ENCODE measurements at regions of chr12 and their contacts with region 1.

Region 1: DNA sequence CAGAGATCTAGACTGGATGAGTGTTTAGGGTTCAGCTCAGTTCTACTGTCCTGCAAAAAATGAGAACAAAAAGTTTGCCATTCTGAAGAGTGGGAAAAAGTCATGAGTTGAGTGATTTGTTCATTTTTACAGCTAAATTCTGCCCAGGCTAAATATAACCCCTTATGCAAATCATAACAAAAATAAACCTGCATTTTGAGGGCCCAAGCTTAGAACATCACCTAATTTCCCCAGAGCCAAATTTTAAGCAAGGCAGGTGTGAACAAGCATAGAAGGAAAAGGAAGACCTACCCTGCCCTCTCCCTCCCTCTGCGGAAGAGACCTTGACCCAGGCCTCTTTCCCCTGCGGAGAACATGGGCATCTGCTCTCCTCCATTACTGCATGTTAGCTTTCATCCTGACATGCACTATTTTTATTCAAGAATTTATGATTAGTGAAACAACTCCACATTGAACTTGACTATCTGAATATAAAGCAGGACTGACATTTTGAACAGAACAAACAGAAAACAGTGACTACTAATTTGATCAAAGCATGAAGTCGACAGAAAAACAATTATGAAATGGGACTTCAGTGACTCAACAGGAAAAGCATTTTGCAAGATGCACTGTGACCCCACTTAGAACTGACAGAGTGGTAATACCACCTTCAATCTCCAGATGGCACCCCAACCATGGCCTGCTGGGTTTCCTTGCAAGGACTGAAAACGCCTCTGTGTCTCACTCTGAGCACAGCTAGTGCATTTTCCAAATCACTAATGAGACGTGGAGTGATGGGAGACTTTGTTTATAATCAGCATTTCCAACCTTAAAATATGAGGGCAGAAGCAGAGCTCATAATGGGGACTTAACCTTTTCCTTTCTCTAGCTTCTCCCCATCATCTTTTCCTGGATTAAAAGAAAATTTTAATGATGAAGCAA is 30.9 kb upstream of the SELPLG start:
- DNase-seq: peak; percentile 87
- H3K4me3 ChIP-seq: no peak overlapping the region
- H3K27ac ChIP-seq: peak overlapping the region; percentile 75
- H3K27me3 ChIP-seq: no peaks in the 10 kb centered on the region
- CTCF ChIP-seq: peak; percentile 98

Region 2: DNA sequence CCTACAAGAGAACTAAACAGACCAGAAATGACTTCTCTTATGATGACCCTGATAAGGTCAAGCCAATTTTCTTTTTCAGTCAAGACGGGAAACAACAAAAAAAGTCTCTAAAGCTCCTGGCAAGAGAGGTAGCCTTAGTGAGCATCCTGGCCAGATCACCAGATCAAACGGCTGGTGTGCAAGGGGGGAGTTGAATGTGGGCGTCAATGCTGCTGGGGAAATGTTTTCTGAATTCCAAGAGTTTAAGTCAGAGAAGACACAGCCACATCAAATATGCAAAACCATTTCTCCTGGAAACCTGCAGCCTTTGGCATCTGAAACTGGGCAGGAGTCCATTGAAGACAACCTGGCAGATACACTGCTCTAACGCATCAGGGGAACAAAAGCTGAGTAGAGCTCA is 14.9 kb before region 1 on chr12:
- CTCF ChIA-PET with region 1: interaction called, 18 read pairs
- POLR2A ChIA-PET with region 1: interaction called, 12 read pairs
- DNase-seq: peak; percentile 78
- H3K4me3 ChIP-seq: no peak overlapping the region
- H3K27ac ChIP-seq: peak overlapping the region; percentile 68
- H3K27me3 ChIP-seq: no peaks in the 10 kb centered on the region
- CTCF ChIP-seq: no peak

Region 3: DNA sequence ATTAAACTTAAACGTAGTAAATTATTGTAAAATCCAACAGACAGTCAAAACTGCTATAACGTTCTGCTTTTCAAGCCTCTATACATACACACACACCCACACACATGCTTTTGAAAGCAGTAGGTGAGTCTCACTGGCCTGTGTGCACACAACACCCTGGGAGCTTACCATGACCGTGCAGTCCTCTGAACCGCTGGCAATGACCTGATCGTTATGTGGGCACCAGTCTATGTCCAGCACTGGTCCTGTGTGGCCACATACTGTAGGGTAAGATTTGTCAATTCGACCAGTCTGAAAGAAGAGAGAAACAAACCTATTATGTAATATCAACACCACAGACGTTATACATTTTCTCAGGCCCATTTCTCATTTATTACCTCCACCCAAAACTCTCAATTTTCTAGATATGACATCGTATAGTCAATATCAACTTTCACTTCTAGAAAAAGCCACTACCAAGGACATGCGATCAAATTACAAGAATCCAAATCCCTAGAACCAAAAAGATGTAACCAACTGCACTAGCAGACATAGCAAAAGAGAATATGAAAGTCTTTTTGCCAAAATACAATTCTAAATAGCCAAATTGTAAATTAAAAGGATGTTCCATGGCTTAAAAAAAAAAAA is 13.6 kb after region 1 on chr12:
- CTCF ChIA-PET with region 1: interaction called, 11 read pairs
- POLR2A ChIA-PET with region 1: no interaction called
- DNase-seq: no peak
- H3K4me3 ChIP-seq: no peak overlapping the region
- H3K27ac ChIP-seq: no peak overlapping the region
- H3K27me3 ChIP-seq: no peaks in the 10 kb centered on the region
- CTCF ChIP-seq: no peak

Region 4: DNA sequence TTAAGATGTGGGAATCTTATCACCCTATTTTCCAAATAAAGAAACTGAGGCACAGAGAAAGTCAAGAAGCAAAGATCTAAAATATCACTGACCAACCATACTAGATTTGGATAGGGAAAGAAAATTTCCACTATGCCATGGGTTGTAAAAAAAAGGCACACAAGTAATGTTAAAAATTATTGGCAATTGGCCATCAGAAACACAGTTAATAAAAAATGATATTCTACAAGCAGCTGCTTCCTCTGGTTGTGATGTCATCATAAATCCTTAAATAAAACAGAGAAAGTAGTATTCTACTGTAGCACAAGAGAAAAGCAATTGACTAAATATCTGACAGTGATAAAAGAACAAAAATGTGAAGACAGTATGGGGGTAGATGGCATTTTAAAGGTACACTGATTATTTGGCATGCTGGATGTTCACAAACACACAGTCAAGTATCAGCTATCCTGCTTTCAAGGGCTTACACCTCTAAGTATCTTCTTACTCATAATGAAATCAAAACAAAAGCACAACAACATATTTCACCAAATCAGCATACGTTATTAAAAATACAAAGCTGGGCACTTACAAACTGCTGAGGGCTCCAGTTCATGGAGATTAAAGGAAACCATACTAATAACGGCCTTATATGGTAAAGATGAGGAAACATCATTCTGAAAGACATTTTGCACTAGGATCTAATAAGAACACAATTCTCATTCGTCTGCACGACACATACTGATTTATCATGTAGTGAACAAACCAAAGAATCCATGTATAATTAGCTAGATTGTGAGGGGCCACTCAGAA is 21.1 kb after region 1 on chr12:
- CTCF ChIA-PET with region 1: interaction called, 19 read pairs
- POLR2A ChIA-PET with region 1: interaction called, 13 read pairs
- DNase-seq: no peak
- H3K4me3 ChIP-seq: no peak overlapping the region
- H3K27ac ChIP-seq: no peak overlapping the region
- H3K27me3 ChIP-seq: no peaks in the 10 kb centered on the region
- CTCF ChIP-seq: no peak

Region 5: DNA sequence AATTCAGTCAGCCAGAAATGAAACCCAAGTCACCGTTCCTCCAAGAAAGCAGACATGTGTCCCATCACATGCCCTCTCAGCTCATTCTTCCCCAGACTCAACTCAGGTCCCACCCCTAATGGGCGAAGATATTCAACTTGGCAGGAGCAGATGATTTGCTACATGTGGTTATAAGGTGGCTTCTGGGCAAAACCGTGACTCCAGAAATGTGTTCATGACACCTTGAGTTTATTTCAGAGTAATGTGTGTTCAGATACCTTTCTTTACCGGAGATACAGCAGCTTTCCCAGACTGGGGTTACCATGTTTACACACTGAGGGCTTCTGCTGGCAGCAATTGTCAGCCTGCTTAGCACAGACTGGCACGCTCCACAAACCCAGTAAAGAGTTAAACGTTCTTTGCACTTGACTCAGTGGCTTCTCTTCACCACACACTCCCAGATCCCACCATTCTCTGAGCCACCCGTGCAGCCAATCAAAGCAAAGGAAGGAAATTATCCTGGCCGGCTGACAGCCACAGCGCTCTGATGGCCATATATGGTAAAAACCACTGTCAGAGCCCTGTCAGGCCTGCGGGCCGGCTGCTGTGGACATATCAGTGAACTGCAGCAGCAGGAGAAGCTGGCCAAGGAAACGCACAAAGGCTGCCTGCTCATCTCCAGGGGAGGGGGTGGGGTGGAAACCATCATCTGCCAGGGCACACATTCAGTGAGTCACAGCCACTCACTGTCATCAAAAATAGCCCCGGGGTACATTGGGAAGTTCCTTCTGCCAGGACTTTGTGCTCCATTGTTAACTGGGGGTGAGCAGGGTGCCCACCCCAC is 26.8 kb after region 1 on chr12:
- CTCF ChIA-PET with region 1: interaction called, 19 read pairs
- POLR2A ChIA-PET with region 1: interaction called, 13 read pairs
- DNase-seq: peak; percentile 99
- H3K4me3 ChIP-seq: peak overlapping the region; percentile 46
- H3K27ac ChIP-seq: peak overlapping the region; percentile 100
- H3K27me3 ChIP-seq: no peaks in the 10 kb centered on the region
- CTCF ChIP-seq: peak; percentile 31

Region 6: DNA sequence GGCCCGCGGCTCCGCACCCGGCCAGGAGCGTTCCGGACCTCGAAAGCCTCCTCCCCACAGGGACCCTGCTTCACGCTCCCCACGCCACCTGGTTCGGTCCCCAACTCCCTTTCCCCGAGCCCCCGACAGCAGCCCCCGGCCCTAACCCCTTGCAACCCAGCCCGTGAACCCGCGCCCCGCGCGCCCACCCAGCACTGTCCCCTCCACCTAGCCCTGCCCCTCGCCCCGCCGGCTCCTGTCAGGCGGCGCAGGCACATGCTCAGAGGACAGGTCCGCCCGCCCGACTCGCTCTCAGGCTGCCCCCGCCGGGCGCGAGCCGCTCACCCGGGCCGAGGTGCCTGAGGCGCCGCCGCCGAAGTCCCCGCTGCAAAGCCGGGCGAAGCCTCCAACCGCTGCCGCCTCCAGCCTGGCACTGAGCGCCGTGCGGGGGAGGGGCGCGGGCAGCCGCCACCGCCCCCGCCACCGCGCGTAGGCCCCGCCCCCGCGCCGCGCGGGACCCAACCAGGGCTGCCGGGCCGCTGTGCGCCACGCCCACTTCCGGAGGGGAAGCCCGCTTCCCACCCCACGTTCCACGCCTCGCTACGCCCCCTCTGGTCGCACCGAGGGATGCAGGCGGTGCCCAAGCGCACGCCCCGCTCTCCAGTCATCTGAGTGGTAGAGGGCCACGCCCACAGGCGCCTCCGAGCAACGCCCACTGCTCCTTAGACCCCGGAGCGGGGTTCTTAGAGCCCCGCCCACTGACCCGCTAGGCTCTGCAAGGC is 66.7 kb after region 1 on chr12 and contains the start of gene CORO1C:
- CTCF ChIA-PET with region 1: interaction called, 7 read pairs
- POLR2A ChIA-PET with region 1: interaction called, 12 read pairs
- DNase-seq: peak; percentile 91
- H3K4me3 ChIP-seq: peak within 1 kb of the TSS; percentile 98
- H3K27ac ChIP-seq: peak within 1 kb of the TSS; percentile 96
- H3K27me3 ChIP-seq: no peaks in the 10 kb centered on the region
- CTCF ChIP-seq: peak; percentile 77
- polyA plus RNA-seq, gene CORO1C: 596 and 687 TPM in 2 replicates

Region 7: DNA sequence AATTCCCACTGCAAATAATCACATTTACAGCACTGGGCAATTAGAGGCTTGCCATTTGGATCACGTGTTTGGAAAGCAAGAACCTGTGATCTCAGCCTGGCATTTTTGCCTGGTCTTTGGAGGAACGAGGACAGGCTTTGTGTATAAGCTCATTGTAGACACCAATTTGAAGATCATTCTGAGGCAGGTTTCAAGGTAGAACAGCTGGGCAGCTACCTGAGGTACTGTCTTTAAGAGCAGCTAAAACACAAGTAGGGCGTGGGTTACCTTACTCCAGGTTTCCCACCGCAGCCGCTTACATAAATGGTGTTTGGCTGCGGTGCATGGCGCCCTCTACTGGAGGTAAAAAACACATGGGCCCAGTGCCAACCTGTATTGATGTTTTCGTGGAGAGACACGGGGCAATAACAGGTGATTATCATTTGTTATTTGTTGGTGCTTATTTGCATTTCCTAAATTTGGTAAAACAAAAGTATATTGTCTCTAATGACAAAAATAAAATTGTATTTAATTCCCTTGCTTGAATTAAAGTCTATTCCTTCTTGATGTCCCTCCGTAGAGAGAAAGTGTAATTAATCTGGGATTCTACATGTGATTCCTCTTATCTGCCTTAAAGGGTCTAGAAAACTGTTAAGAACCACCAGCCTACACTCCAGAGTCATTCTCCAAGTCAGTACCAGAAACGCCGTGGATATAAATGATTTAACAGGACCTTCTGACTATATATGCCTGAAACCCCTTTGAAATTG is 286.6 kb after region 1 on chr12:
- CTCF ChIA-PET with region 1: interaction called, 21 read pairs
- POLR2A ChIA-PET with region 1: no interaction called
- DNase-seq: peak; percentile 13
- H3K4me3 ChIP-seq: no peak overlapping the region
- H3K27ac ChIP-seq: no peak overlapping the region
- H3K27me3 ChIP-seq: peaks cover 2% of the 10 kb centered on the region
- CTCF ChIP-seq: peak; percentile 84

Region 8: GRCh38 chr12:109137055-109137454 is 472.5 kb after region 1 on chr12:
- CTCF ChIA-PET with region 1: no interaction called
- POLR2A ChIA-PET with region 1: no interaction called
- DNase-seq: no peak
- H3K4me3 ChIP-seq: no peak overlapping the region
- H3K27ac ChIP-seq: no peak overlapping the region
- H3K27me3 ChIP-seq: peaks cover 5% of the 10 kb centered on the region
- CTCF ChIP-seq: no peak

Measured in AG04450 (cell line).